Activated CD8-positive, alpha-beta T cell treated with anti-CD3 and anti-CD28 coated beads, Interleukin-2, amount 10 ng/mL, durations not matched to agents 7 days and 5 days (primary cell): ENCODE measurements at regions of chr3 and their contacts with region 1.

Region 1: DNA sequence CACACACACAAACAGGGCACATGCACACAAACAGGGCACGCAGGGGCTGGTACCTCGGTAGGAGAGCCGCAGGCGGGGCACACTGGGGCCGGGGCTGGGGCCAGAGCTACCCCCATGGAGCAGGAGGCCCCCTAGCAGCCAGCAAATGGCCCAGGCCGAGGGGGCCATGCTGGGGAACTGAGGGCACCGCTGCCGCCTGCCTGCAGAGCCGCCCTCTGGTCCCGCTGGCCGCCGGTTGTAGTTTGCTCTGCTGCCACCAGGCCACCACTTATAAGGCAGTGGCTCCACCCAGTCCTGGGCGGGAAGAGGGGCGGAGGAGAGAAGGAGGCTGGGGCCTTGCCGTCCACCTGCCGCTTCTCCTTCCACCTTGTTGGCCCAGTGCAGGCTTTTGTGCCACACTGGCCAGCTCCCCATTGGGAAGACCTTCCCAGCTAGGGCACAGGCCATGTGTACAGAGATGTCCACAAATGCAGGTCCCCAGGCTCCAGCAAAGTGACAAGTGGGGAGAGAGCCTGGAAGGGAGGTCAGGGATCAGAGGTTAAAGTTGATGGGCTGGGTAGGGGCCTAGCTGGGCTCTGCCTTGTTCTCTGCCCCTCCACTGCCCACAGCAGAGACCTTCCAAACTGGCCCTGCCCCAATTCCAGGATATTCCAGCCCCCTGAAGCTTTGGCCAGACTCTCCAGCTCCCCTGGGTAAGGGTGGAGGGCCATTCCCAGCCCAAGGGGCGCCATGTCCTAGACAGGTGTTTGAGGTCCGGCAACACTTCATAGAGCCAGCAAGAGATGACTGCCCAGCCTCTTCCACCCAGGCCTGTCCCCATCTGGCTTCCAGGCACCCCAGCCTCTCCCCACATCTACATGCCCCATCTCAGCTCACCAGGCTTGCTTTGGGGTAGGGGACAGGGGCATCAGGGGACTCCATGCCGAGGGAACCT is at the start of gene SEMA3G:
- DNase-seq: peak; percentile 90
- ATAC-seq: peak; percentile 98
- H3K4me3 Mint-ChIP-seq: no peak within 1 kb of the TSS
- H3K27ac Mint-ChIP-seq: peak within 1 kb of the TSS; percentile 30
- H3K4me1 Mint-ChIP-seq: peaks cover 19% of the 10 kb centered on the region
- H3K27me3 Mint-ChIP-seq: no peaks in the 10 kb centered on the region
- total RNA-seq, gene SEMA3G: 0.13 to 0.21 TPM

Region 2: DNA sequence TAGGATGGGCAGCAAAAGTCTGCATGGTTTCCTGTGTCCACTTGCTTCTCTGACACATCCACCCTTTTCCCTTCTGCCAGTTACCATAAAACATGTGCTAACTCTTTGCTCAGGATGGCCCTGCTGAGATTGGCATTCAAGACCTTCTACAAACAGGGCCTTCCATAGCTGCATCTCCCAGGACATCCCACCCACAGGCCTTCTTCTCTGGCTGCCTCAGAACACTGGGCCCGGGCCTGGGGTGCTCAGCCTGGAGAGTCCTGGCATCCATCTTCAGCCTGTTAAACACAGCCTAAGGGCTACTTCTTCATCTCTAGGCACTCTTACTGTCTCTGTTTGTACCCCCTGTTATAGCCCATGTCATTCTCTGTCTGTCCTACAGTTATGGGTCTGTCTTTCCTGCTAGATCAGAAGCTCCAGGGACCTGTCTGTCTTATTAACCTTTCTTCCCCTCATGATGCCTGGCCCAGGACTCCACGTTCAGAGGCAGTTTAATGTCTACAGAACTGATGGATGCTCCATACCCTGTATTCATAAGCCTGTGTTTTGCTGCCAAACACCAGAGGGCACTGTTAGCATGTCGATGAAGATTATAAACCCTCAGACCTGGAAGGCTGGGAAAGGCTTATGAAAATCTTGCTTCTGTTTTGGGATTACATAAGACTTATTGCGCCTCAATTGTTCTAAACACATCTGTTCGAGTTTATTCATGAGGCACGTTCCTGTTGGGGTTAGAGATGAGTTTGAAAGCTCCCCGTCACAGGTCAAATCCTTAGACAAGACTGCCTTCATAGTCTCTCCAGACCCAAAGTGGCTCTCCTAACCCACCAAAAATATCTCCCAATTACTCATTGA is 16.7 kb before region 1 on chr3:
- CTCF ChIA-PET with region 1: interaction called, 131 read pairs
- POLR2A ChIA-PET with region 1: no interaction called
- DNase-seq: peak; percentile 53
- ATAC-seq: peak; percentile 82
- H3K4me3 Mint-ChIP-seq: no peak overlapping the region
- H3K27ac Mint-ChIP-seq: no peak overlapping the region
- H3K4me1 Mint-ChIP-seq: no peaks in the 10 kb centered on the region
- H3K27me3 Mint-ChIP-seq: peaks cover 8% of the 10 kb centered on the region

Region 3: GRCh38 chr3:52455283-52456168 is 10.4 kb after region 1 on chr3 and contains the start of gene NISCH:
- CTCF ChIA-PET with region 1: interaction called, 14 read pairs
- POLR2A ChIA-PET with region 1: interaction called, 3 read pairs
- DNase-seq: peak; percentile 95
- ATAC-seq: peak; percentile 93
- H3K4me3 Mint-ChIP-seq: peak within 1 kb of the TSS; percentile 91
- H3K27ac Mint-ChIP-seq: peak within 1 kb of the TSS; percentile 95
- H3K4me1 Mint-ChIP-seq: peaks cover 44% of the 10 kb centered on the region
- H3K27me3 Mint-ChIP-seq: no peaks in the 10 kb centered on the region
- total RNA-seq, gene NISCH: 77.2 to 82.6 TPM

Region 4: GRCh38 chr3:53092942-53093341 is 647.8 kb after region 1 on chr3:
- CTCF ChIA-PET with region 1: no interaction called
- POLR2A ChIA-PET with region 1: no interaction called
- DNase-seq: no peak
- ATAC-seq: no peak
- H3K4me3 Mint-ChIP-seq: no peak overlapping the region
- H3K27ac Mint-ChIP-seq: no peak overlapping the region
- H3K4me1 Mint-ChIP-seq: peaks cover 5% of the 10 kb centered on the region
- H3K27me3 Mint-ChIP-seq: no peaks in the 10 kb centered on the region